Body of pancreas (tissue), 4 donors: ENCODE measurements at regions of chr21 and their contacts with region 1.

Region 1: DNA sequence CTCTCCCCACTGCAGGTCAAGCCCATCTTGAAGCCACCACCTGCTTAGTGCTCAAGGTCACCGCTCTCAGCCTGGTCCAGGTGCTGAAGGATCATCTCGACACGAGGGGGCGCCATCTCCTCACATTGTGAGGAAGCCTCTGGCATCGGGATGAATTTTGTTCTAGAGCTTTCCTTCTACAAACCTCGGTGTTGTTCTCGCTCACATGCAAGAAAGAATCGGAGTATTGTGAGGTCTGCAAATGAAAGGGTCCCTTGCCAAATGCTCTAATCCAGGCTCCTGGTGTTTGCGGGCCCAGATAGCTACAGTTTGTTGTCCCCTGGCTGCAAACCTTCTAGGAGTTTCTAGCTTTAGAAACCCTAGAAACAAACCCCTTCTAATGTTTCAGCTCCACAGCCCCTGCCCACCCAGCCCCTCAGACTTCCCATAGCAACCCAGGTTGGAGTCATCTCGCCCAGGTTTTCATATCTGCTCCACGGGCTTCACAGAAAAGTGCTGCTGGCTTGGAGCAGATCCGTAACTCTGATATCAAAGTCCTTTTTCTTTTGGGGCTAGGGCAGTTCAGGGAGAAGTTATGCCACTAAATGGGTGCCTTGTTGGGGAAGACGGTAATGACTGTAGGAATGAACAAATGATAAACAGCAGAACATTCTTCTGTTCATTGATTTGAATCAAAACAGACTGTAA is 8.6 kb upstream of the ATP5PO start:
- DNase-seq: peak; percentile 90 to 94 (median 94)
- ATAC-seq: peak; percentile 95
- H3K4me3 ChIP-seq: no peak overlapping the region
- H3K27ac ChIP-seq: no peak overlapping the region
- H3K4me1 ChIP-seq: no peaks in the 10 kb centered on the region
- H3K27me3 ChIP-seq: no peaks in the 10 kb centered on the region
- CTCF ChIP-seq: peak; percentile 73 to 96 (median 93)
- POLR2A ChIP-seq: no peak

Region 2: DNA sequence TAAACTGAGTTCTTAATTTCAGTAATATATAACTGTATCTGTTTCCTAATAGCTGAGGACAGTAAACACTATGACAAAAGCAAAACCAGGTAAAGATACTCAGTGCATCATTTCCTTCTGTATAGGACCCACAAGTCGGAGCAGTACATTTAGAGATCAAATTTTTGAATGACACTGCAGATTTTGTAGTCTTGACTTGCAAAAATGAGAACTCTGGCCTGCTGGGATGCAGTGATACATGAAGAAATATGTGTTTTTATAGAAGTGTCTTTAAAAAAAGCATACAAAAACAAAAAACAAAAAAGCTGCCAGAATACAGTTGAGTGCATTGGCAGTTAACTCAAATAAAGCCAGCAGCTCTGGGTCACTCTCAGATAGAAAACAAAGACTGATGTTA is 401.3 kb before region 1 on chr21:
- intact Hi-C with region 1: no loop called
- DNase-seq: no peak
- ATAC-seq: no peak
- H3K4me3 ChIP-seq: no peak overlapping the region
- H3K27ac ChIP-seq: no peak overlapping the region
- H3K4me1 ChIP-seq: no peaks in the 10 kb centered on the region
- H3K27me3 ChIP-seq: no peaks in the 10 kb centered on the region
- CTCF ChIP-seq: no peak
- POLR2A ChIP-seq: no peak

Region 3: GRCh38 chr21:34202553-34203372 is 278.5 kb after region 1 on chr21:
- intact Hi-C with region 1: loop called (anchors 10 kb)
- DNase-seq: peak in 3 of 4 donors; percentile 16 to 28 (median 18)
- ATAC-seq: peak; percentile 19
- H3K4me3 ChIP-seq: no peak overlapping the region
- H3K27ac ChIP-seq: peak overlapping the region in 1 of 4 donors; percentile 62
- H3K4me1 ChIP-seq: peaks cover 15% of the 10 kb centered on the region
- H3K27me3 ChIP-seq: no peaks in the 10 kb centered on the region
- CTCF ChIP-seq: no peak
- POLR2A ChIP-seq: no peak

Region 4: GRCh38 chr21:34345091-34345871 is 421.1 kb after region 1 on chr21:
- intact Hi-C with region 1: loop called (anchors 5 kb)
- DNase-seq: peak in 1 of 4 donors; percentile 7
- ATAC-seq: no peak
- H3K4me3 ChIP-seq: no peak overlapping the region
- H3K27ac ChIP-seq: no peak overlapping the region
- H3K4me1 ChIP-seq: no peaks in the 10 kb centered on the region
- H3K27me3 ChIP-seq: no peaks in the 10 kb centered on the region
- CTCF ChIP-seq: no peak
- POLR2A ChIP-seq: no peak